Activated naive CD4-positive, alpha-beta T cell treated with anti-CD3 and anti-CD28 coated beads for 36 hours (primary cell): ENCODE measurements at regions of chr10 and their contacts with region 1.

Region 1: GRCh38 chr10:62177093-62177492 is 91.6 kb downstream of the RTKN2 start:
- DNase-seq: no peak
- H3K4me3 Mint-ChIP-seq: no peak overlapping the region
- H3K27ac Mint-ChIP-seq: no peak overlapping the region
- H3K4me1 Mint-ChIP-seq: peaks cover 51% of the 10 kb centered on the region
- H3K27me3 Mint-ChIP-seq: no peaks in the 10 kb centered on the region

Region 2: DNA sequence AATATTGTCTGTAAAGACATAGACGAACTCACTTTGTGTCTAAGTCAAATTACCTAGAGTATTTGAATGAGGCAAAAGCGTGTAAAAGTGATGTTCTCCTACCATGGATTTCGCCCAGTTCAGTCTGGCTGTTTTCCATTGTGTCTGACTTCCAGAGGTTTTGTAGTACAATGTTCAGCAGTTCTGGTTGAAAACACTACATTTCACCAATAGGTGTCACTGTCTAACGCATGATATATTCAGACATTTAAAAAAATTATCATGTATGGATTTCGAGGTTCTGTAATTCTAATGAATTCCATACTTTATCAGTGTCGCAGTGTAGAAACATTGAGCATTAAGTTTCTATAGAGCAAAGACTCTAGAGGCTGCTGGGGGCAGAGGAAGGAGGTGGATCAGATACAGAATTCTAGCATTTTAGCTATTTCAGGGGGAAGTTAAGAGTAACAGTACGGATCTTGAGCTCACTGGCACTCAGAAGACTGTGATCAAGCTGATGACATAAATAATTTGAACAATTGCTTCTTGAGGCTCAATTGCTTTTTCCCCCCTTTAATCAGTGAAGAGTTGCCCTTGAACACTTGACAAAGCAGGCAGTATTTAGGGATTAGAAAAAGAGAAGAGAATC is 1036.2 kb before region 1 on chr10:
- CTCF ChIA-PET with region 1: no interaction called
- intact Hi-C with region 1: no loop called
- DNase-seq: no peak
- H3K4me3 Mint-ChIP-seq: no peak overlapping the region
- H3K27ac Mint-ChIP-seq: no peak overlapping the region
- H3K4me1 Mint-ChIP-seq: no peaks in the 10 kb centered on the region
- H3K27me3 Mint-ChIP-seq: peaks cover 3% of the 10 kb centered on the region

Region 3: GRCh38 chr10:62057359-62057758 is 119.7 kb before region 1 on chr10:
- CTCF ChIA-PET with region 1: no interaction called
- intact Hi-C with region 1: no loop called
- DNase-seq: no peak
- H3K4me3 Mint-ChIP-seq: peak overlapping the region; percentile 1
- H3K27ac Mint-ChIP-seq: peak overlapping the region; percentile 100
- H3K4me1 Mint-ChIP-seq: peaks cover 96% of the 10 kb centered on the region
- H3K27me3 Mint-ChIP-seq: no peaks in the 10 kb centered on the region

Region 4: DNA sequence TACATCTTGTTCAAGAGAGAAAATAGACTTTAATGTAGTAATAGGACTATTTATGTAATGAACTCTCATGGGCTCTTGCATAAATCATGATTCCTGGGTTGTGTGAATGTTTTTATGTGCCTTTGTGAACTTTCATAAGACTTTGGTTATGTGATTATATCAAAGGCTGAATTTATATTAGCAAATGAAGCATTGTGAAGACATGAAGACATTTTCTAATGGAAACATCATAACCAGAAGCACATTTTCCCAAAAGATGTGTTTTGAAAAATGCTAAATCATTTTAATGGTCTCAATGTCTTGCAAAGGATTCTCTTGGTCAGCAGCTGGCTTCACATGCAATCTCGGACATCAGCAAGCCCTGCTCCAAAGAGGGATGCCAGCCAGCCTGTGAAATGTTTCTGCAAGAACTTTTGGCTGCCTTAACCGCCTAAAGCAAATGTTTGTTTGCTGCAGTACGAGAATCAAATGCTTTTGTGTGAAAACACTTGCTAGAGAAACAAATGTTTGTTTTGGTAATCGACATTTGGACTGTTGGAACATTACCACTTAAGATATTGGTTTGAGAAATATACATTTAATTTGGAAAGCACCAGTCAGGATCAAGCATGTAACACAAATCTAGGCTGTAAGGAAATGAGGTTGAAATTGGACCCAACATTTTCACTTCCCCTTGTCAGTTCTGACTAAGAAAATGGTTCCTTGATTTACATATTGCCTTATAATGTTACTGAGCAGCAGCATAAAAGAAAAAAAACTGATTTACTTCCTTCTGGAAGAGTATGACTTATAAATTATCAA is 10.6 kb before region 1 on chr10:
- CTCF ChIA-PET with region 1: no interaction called
- intact Hi-C with region 1: loop called (anchors 1 kb)
- DNase-seq: no peak
- H3K4me3 Mint-ChIP-seq: no peak overlapping the region
- H3K27ac Mint-ChIP-seq: no peak overlapping the region
- H3K4me1 Mint-ChIP-seq: peaks cover 15% of the 10 kb centered on the region
- H3K27me3 Mint-ChIP-seq: no peaks in the 10 kb centered on the region